ENCODE measurements at regions of chr5 and their contacts with region 1.

Region 1: GRCh38 chr5:77168161-77168875 is 42.2 kb upstream of the PDE8B start:
- DNase-seq: peak; percentile 57
- ATAC-seq: peak; percentile 77
- H3K4me3 ChIP-seq: no peak overlapping the region
- H3K27ac ChIP-seq: peak overlapping the region; percentile 80
- H3K4me1 ChIP-seq: peaks cover 20% of the 10 kb centered on the region
- H3K27me3 ChIP-seq: peaks cover 4% of the 10 kb centered on the region
- CTCF ChIP-seq: no peak
- POLR2A ChIP-seq: no peak
- RAD21 ChIP-seq: no peak

Region 2: GRCh38 chr5:76473661-76474060 is 694.7 kb before region 1 on chr5:
- CTCF ChIA-PET with region 1: no interaction called
- POLR2A ChIA-PET with region 1: no interaction called
- dilution Hi-C with region 1: no loop called
- in situ Hi-C with region 1: no loop called
- intact Hi-C with region 1: loop called (anchors 5 kb)
- DNase-seq: no peak
- ATAC-seq: no peak
- H3K4me3 ChIP-seq: no peak overlapping the region
- H3K27ac ChIP-seq: no peak overlapping the region
- H3K4me1 ChIP-seq: no peaks in the 10 kb centered on the region
- H3K27me3 ChIP-seq: no peaks in the 10 kb centered on the region; the same call in 1 of the 2 replicates
- CTCF ChIP-seq: no peak
- POLR2A ChIP-seq: no peak
- RAD21 ChIP-seq: no peak

Measured in IMR-90 (cell line).